HCT116 (cell line): ENCODE measurements at regions of chr4 and their contacts with region 1.

Region 1: GRCh38 chr4:89434364-89434988 is 126.9 kb upstream of the GPRIN3 start:
- DNase-seq: peak; percentile 18
- ATAC-seq: peak; percentile 60
- H3K4me3 ChIP-seq: no peak overlapping the region
- H3K27ac ChIP-seq: no peak overlapping the region
- H3K4me1 ChIP-seq: peaks cover 0 to 6% of the 10 kb centered on the region in 2 experiments; a peak in 1 of 4 replicates
- H3K27me3 ChIP-seq: no peaks in the 10 kb centered on the region
- CTCF ChIP-seq: peak; percentile 63 to 77 (median 76)
- POLR2A ChIP-seq: no peak
- RAD21 ChIP-seq: peak; percentile 79

Region 2: DNA sequence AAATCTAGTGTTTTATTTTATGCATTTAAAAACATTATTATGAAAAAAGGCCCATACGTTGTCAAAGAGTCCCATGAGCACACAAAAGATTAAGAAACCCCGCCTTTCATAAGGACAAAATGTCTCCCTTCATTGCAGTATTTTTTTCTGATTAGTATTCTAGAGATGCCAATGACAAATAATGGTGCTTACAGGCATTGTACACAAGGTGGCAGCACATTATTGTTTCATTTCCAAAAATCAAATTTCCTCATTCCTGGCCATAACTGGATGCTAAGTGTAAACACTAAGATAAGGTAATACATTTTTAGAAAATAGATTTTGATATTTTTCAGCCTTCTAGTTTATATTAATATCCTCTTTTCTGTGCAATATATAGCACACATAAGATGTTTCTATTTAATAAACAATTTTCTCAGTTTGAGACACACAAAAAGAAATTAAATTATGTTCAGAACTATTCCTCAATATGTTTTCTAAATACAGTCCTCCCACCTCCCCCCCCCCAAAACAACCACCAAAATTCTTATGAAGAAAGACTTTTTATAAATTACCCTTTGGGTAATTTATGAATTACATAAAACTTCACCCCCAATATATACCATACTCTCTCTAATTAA is 275.5 kb before region 1 on chr4:
- CTCF ChIA-PET with region 1: interaction called, 3 read pairs
- POLR2A ChIA-PET with region 1: no interaction called
- RAD21 ChIA-PET with region 1: no interaction called
- intact Hi-C with region 1: loop called (anchors 2 kb)
- DNase-seq: peak; percentile 43
- ATAC-seq: peak; percentile 80
- H3K4me3 ChIP-seq: no peak overlapping the region
- H3K27ac ChIP-seq: no peak overlapping the region
- H3K4me1 ChIP-seq: no peaks in the 10 kb centered on the region
- H3K27me3 ChIP-seq: no peaks in the 10 kb centered on the region
- CTCF ChIP-seq: peak; percentile 52 to 79 (median 60); a peak in 5 of 6 replicates
- POLR2A ChIP-seq: no peak
- RAD21 ChIP-seq: peak; percentile 76

Region 3: GRCh38 chr4:89254847-89255246 is 179.6 kb before region 1 on chr4:
- CTCF ChIA-PET with region 1: no interaction called
- POLR2A ChIA-PET with region 1: no interaction called
- RAD21 ChIA-PET with region 1: no interaction called
- intact Hi-C with region 1: loop called (anchors 10 kb)
- DNase-seq: peak; percentile 37
- ATAC-seq: peak; percentile 84
- H3K4me3 ChIP-seq: no peak overlapping the region
- H3K27ac ChIP-seq: no peak overlapping the region
- H3K4me1 ChIP-seq: no peaks in the 10 kb centered on the region
- H3K27me3 ChIP-seq: no peaks in the 10 kb centered on the region
- CTCF ChIP-seq: peak; percentile 50 to 93 (median 82); a peak in 5 of 6 replicates
- POLR2A ChIP-seq: no peak
- RAD21 ChIP-seq: peak; percentile 54

Region 4: GRCh38 chr4:89898304-89898716 is 463.8 kb after region 1 on chr4:
- CTCF ChIA-PET with region 1: interaction called, 3 read pairs
- POLR2A ChIA-PET with region 1: no interaction called
- RAD21 ChIA-PET with region 1: no interaction called
- intact Hi-C with region 1: loop called (anchors 1 kb)
- DNase-seq: no peak
- ATAC-seq: no peak
- H3K4me3 ChIP-seq: no peak overlapping the region
- H3K27ac ChIP-seq: no peak overlapping the region
- H3K4me1 ChIP-seq: no peaks in the 10 kb centered on the region
- H3K27me3 ChIP-seq: no peaks in the 10 kb centered on the region
- CTCF ChIP-seq: no peak
- POLR2A ChIP-seq: no peak
- RAD21 ChIP-seq: no peak